Activated CD8-positive, alpha-beta T cell treated with anti-CD3 and anti-CD28 coated beads, Interleukin-2, amount 10 ng/mL, durations not matched to agents 7 days and 5 days (primary cell): ENCODE measurements at regions of chr3 and their contacts with region 1.

Region 1: DNA sequence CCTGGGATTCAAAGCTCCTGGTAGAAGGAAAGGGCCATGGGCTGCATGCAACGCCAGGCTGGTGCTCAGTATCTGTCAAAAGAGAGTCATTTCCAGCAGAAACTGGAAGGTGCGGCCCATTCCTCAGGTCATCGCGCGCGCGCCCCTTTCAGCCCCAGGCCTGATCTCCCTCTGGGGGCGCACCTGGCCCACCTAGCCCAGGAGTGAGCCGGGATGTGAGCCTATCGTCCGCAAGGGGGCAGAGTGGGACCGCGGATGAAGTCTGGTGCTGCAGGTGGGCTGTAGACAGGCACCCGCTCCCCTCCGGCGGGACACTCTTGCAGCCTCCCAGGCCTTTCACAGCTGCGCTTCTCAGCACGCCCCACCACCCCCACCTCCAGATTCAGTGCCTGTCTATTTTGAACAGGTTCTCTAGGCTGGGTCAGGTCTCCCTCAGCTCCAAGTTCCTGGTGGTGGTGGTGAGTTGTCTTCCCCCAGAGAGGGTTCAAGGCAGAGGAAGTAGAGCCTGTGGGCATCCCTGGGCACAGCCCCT is 5.8 kb upstream of the RPL29 start:
- DNase-seq: peak; percentile 92
- ATAC-seq: peak; percentile 98
- H3K4me3 Mint-ChIP-seq: no peak overlapping the region
- H3K27ac Mint-ChIP-seq: no peak overlapping the region
- H3K4me1 Mint-ChIP-seq: peaks cover 24% of the 10 kb centered on the region
- H3K27me3 Mint-ChIP-seq: peaks cover 10% of the 10 kb centered on the region

Region 2: GRCh38 chr3:52041118-52041731 is 39.7 kb after region 1 on chr3:
- CTCF ChIA-PET with region 1: interaction called, 13 read pairs
- POLR2A ChIA-PET with region 1: no interaction called
- DNase-seq: no peak
- ATAC-seq: no peak
- H3K4me3 Mint-ChIP-seq: no peak overlapping the region
- H3K27ac Mint-ChIP-seq: no peak overlapping the region
- H3K4me1 Mint-ChIP-seq: peaks cover 2% of the 10 kb centered on the region
- H3K27me3 Mint-ChIP-seq: no peaks in the 10 kb centered on the region

Region 3: DNA sequence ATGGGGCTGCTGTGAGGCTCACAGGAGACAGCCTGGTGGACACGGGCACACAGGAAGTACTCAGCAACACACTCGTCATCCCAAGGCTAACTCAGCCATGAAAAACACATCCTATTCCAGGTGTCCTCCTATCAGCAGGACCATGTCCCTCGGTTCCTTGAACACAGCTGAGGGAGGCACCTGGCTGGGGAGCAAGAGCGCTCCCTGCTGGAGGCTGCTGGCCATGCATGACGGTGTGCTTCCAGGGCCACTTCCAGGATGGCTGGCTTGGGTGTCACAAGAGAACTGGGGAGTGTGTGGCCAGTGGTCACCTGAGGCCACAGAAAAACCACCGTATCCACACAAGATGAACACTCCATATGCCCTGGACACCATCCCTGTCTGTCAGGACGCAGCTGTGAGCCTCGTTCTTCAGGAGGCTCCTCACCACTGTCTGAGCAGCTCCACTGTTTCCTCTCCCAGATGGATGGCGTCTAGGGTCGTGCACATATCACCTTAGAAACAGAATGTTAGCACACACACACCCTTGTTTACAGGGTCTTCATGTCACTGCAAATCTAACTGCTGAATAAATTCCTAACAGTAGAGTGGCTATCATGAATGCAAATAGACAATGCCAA is 121.7 kb after region 1 on chr3:
- CTCF ChIA-PET with region 1: interaction called, 115 read pairs
- POLR2A ChIA-PET with region 1: no interaction called
- DNase-seq: peak; percentile 79
- ATAC-seq: peak; percentile 80
- H3K4me3 Mint-ChIP-seq: no peak overlapping the region
- H3K27ac Mint-ChIP-seq: no peak overlapping the region
- H3K4me1 Mint-ChIP-seq: peaks cover 32% of the 10 kb centered on the region
- H3K27me3 Mint-ChIP-seq: no peaks in the 10 kb centered on the region

Region 4: GRCh38 chr3:52144034-52144795 is 142.7 kb after region 1 on chr3:
- CTCF ChIA-PET with region 1: interaction called, 38 read pairs
- POLR2A ChIA-PET with region 1: interaction called, 3 read pairs
- DNase-seq: peak; percentile 92
- ATAC-seq: peak; percentile 92
- H3K4me3 Mint-ChIP-seq: no peak overlapping the region
- H3K27ac Mint-ChIP-seq: peak overlapping the region; percentile 82
- H3K4me1 Mint-ChIP-seq: peaks cover 14% of the 10 kb centered on the region
- H3K27me3 Mint-ChIP-seq: no peaks in the 10 kb centered on the region